Activated B cell treated with CpG ODN at 0.5 μM for 24 hours (primary cell): ENCODE measurements at regions of chr15 and their contacts with region 1.

Region 1: GRCh38 chr15:79989682-79990081 is 18.7 kb upstream of the BCL2A1 start:
- DNase-seq: no peak
- ATAC-seq: no peak
- H3K4me3 Mint-ChIP-seq: no peak overlapping the region
- H3K27ac Mint-ChIP-seq: no peak overlapping the region
- H3K4me1 Mint-ChIP-seq: peaks cover 35% of the 10 kb centered on the region
- H3K27me3 Mint-ChIP-seq: no peaks in the 10 kb centered on the region
- CTCF ChIP-seq: no peak

Region 2: GRCh38 chr15:79380755-79381497 is 608.8 kb before region 1 on chr15:
- CTCF ChIA-PET with region 1: interaction called, 34 read pairs
- POLR2A ChIA-PET with region 1: no interaction called
- intact Hi-C with region 1: loop called (anchors 1 kb)
- DNase-seq: peak; percentile 59
- ATAC-seq: peak; percentile 68
- H3K4me3 Mint-ChIP-seq: no peak overlapping the region
- H3K27ac Mint-ChIP-seq: no peak overlapping the region
- H3K4me1 Mint-ChIP-seq: no peaks in the 10 kb centered on the region
- H3K27me3 Mint-ChIP-seq: no peaks in the 10 kb centered on the region
- CTCF ChIP-seq: peak; percentile 66

Region 3: GRCh38 chr15:79769069-79769481 is 220.6 kb before region 1 on chr15:
- CTCF ChIA-PET with region 1: no interaction called
- POLR2A ChIA-PET with region 1: no interaction called
- intact Hi-C with region 1: loop called (anchors 1 kb)
- DNase-seq: no peak
- ATAC-seq: no peak
- H3K4me3 Mint-ChIP-seq: no peak overlapping the region
- H3K27ac Mint-ChIP-seq: no peak overlapping the region
- H3K4me1 Mint-ChIP-seq: no peaks in the 10 kb centered on the region
- H3K27me3 Mint-ChIP-seq: peaks cover 8% of the 10 kb centered on the region
- CTCF ChIP-seq: no peak

Region 4: DNA sequence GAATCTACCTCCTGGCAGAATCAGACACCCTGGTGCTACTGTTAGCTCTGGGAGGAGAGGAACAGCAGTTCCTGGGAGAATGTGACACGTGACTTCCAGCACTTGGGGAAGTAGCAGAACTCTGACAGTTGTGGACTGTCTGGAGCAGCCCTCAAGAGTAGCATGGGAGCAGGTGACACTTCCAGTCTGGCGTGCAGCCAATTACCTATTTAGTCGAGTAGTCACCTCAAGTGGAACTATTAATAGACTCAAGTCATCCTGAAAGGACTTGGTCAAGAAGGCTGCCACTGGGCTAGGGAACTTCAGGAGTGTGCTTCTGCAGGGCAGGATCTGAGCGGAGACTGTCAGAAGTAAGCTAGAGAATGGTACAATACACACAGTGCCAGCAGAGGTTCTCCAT is 155.2 kb before region 1 on chr15:
- CTCF ChIA-PET with region 1: no interaction called
- POLR2A ChIA-PET with region 1: no interaction called
- intact Hi-C with region 1: no loop called
- DNase-seq: no peak
- ATAC-seq: no peak
- H3K4me3 Mint-ChIP-seq: no peak overlapping the region
- H3K27ac Mint-ChIP-seq: no peak overlapping the region
- H3K4me1 Mint-ChIP-seq: no peaks in the 10 kb centered on the region
- H3K27me3 Mint-ChIP-seq: no peaks in the 10 kb centered on the region
- CTCF ChIP-seq: no peak

Region 5: GRCh38 chr15:79896637-79897379 is 92.9 kb before region 1 on chr15 and contains the start of gene MTHFS:
- CTCF ChIA-PET with region 1: interaction called, 13 read pairs
- POLR2A ChIA-PET with region 1: interaction called, 5 read pairs
- intact Hi-C with region 1: loop called (anchors 1 kb)
- DNase-seq: peak; percentile 76
- ATAC-seq: peak; percentile 87
- H3K4me3 Mint-ChIP-seq: peak within 1 kb of the TSS; percentile 99
- H3K27ac Mint-ChIP-seq: peak within 1 kb of the TSS; percentile 100
- H3K4me1 Mint-ChIP-seq: peaks cover 54% of the 10 kb centered on the region
- H3K27me3 Mint-ChIP-seq: no peaks in the 10 kb centered on the region
- CTCF ChIP-seq: no peak
- total RNA-seq, gene MTHFS: 28.6 and 29.5 TPM in 2 replicates

Region 6: GRCh38 chr15:79923515-79924395 is 65.9 kb before region 1 on chr15:
- CTCF ChIA-PET with region 1: interaction called, 6 read pairs
- POLR2A ChIA-PET with region 1: interaction called, 7 read pairs
- intact Hi-C with region 1: loop called (anchors 1 kb)
- DNase-seq: peak; percentile 100
- ATAC-seq: peak; percentile 94
- H3K4me3 Mint-ChIP-seq: peak overlapping the region; percentile 93
- H3K27ac Mint-ChIP-seq: peak overlapping the region; percentile 94
- H3K4me1 Mint-ChIP-seq: peaks cover 26% of the 10 kb centered on the region
- H3K27me3 Mint-ChIP-seq: no peaks in the 10 kb centered on the region
- CTCF ChIP-seq: no peak

Region 7: GRCh38 chr15:79978655-79979514 is 10.8 kb before region 1 on chr15:
- CTCF ChIA-PET with region 1: interaction called, 22 read pairs
- POLR2A ChIA-PET with region 1: interaction called, 3 read pairs
- intact Hi-C with region 1: loop called (anchors 1 kb)
- DNase-seq: peak; percentile 28
- ATAC-seq: peak; percentile 64
- H3K4me3 Mint-ChIP-seq: peak overlapping the region; percentile 83
- H3K27ac Mint-ChIP-seq: peak overlapping the region; percentile 94
- H3K4me1 Mint-ChIP-seq: peaks cover 78% of the 10 kb centered on the region
- H3K27me3 Mint-ChIP-seq: no peaks in the 10 kb centered on the region
- CTCF ChIP-seq: no peak